Activated CD4-positive, alpha-beta T cell treated with anti-CD3 and anti-CD28 coated beads for 36 hours (primary cell): ENCODE measurements at regions of chr11 and their contacts with region 1.

Region 1: GRCh38 chr11:66616379-66617154 is at the start of gene RBM14:
- DNase-seq: peak; percentile 99
- ATAC-seq: peak; percentile 98
- H3K4me3 Mint-ChIP-seq: peak within 1 kb of the TSS; percentile 89
- H3K27ac Mint-ChIP-seq: peak within 1 kb of the TSS; percentile 97
- H3K4me1 Mint-ChIP-seq: peaks cover 31% of the 10 kb centered on the region
- H3K27me3 Mint-ChIP-seq: no peaks in the 10 kb centered on the region
- total RNA-seq, gene RBM14: 122 to 137 TPM

Region 2: GRCh38 chr11:66311965-66312548 is 304.5 kb before region 1 on chr11:
- CTCF ChIA-PET with region 1: no interaction called
- POLR2A ChIA-PET with region 1: interaction called, 4 read pairs
- intact Hi-C with region 1: loop called in 1 of 2 experiments (anchors 1 kb)
- DNase-seq: peak; percentile 98
- ATAC-seq: peak; percentile 83
- H3K4me3 Mint-ChIP-seq: peak overlapping the region; percentile 79
- H3K27ac Mint-ChIP-seq: peak overlapping the region; percentile 91
- H3K4me1 Mint-ChIP-seq: peaks cover 33% of the 10 kb centered on the region
- H3K27me3 Mint-ChIP-seq: no peaks in the 10 kb centered on the region

Region 3: DNA sequence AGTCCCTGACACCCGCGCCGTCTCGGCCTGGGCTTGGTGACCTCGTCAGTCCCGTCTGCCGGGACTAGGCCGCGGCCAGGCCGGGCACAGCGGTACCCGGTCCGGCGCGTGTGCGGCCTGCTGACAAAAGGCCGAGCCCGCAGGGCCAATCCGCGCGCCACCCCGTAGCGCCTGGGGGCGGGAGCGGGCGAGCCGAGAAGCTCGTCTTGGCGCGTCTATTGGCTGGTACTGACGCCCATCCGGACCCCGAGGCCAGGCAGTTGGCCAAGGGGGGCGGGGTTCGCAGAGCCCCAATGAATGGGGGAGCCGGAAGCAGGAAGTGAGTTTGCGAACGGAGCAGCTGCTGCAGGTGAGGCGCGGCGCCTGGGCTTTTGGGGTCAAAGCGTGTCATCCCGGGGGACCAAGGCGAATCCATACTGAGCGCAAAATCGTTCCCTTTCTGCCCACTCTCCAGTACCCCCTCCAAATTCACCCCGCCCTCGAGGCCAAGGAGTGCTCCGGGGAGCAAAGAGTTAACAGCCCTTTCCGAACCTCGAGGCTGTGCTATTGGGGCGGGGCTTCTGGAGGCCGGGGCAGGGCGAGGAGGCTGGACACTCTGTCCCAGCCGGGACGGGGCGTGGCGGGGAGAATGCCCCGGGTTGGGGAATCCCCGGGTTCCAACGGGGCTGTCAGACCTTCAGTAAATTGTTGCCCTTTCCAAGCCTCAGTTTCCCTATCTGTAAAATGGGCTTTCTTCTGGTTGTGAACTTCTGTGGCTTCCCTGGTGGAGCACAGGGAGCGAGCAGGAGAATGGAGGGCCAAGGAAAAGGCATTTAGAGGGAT is 136.2 kb before region 1 on chr11 and contains the start of gene DPP3:
- CTCF ChIA-PET with region 1: no interaction called
- POLR2A ChIA-PET with region 1: no interaction called
- intact Hi-C with region 1: loop called (anchors 1 to 5 kb)
- DNase-seq: peak; percentile 98
- ATAC-seq: peak; percentile 98
- H3K4me3 Mint-ChIP-seq: peak within 1 kb of the TSS; percentile 90
- H3K27ac Mint-ChIP-seq: peak within 1 kb of the TSS; percentile 86
- H3K4me1 Mint-ChIP-seq: peaks cover 22% of the 10 kb centered on the region
- H3K27me3 Mint-ChIP-seq: no peaks in the 10 kb centered on the region
- total RNA-seq, gene DPP3: 87.1 to 91.9 TPM

Region 4: DNA sequence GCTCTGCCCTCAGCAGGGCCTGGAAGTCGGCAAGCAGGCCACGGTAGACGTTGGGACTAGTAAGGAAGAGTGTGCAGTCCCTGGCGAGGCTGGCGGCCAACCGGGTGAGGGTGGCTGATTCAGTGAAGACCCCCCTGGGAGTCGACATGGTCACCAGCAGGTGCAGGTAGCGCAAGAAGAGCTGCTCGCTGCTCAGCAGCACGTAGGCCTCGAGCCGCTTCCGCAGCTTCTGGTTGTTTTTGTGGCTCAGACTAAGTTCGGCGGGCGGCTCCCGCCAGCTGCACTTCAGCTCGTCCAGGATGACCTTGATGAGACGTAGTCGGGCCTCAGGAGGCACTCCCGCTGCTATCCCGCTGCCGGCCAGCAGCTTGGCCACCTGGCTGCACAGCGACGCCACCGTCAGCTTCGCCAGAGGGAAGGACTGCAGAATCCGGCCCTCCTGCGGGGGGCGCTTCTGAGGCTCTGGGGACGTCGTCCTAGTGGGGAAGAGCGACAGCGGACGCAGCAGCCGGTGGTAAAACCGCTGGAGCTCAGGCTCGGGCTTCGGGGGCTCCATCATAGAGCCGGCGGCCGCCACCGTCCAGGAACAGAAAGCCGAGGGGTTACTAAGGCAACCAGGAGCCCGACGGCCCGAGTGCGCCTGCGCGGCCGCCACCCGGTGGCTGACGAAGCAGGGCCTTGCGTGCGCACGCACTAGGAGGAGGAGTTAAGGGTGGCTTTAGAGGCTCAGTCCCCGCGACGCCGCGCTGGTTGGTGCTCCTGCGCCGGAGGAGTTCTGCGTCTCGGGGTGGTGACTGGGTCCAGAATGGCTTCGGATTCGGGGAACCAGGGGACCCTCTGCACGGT is 23.9 kb before region 1 on chr11 and contains the starts of genes CCDC87 and CCS:
- CTCF ChIA-PET with region 1: interaction called, 4 read pairs
- POLR2A ChIA-PET with region 1: interaction called, 10 read pairs
- intact Hi-C with region 1: loop called (anchors 1 kb)
- DNase-seq: peak; percentile 99
- ATAC-seq: peak; percentile 100
- H3K4me3 Mint-ChIP-seq: peak within 1 kb of the TSS; percentile 93
- H3K27ac Mint-ChIP-seq: peak within 1 kb of the TSS; percentile 98
- H3K4me1 Mint-ChIP-seq: peaks cover 19% of the 10 kb centered on the region
- H3K27me3 Mint-ChIP-seq: no peaks in the 10 kb centered on the region
- total RNA-seq, gene CCDC87: 0.09 to 0.14 TPM
- total RNA-seq, gene CCS: 16.3 to 24.0 TPM

Region 5: DNA sequence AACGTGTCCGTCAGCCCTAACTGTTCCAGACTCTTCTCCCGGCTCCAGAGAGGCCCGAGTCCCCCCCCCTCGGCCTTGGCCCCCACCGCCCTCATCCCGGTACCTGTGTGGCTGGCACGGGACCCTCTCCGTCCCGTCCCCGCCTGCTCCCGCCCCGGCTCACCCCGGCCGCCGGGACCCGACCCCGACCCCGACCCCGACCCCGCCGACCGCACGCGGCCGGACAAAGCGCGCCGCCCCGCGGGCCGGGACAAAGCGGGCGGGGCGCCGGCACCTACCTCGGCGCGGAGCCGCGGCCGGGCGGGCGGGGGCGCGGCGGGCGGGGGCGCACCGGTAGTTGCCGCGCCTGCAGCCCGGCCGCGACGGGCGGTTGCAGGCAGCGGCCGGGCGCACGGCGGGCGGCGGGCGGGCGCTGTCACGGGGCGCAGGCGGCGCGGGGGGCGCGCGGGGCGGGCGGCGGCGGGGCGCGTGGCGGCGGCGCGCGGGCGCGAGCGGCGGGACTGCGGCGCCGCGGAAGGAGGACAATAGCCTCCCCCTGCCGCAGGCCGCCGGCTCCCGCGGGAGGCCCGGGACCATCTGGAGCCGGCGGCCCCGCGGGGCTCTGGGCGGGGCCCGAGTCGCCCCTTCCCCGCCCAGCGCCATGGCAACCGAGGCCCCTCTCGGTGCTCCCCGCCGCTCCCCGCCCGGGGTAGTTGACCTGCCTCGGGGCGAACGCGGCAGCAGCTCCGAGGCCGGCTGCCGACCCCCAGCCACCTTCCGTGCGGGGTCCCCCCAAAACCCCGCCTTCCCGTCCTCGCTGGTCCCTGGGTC is 111.5 kb after region 1 on chr11:
- CTCF ChIA-PET with region 1: no interaction called
- POLR2A ChIA-PET with region 1: no interaction called
- intact Hi-C with region 1: no loop called
- DNase-seq: peak; percentile 13
- ATAC-seq: peak; percentile 38
- H3K4me3 Mint-ChIP-seq: peak overlapping the region; percentile 70
- H3K27ac Mint-ChIP-seq: peak overlapping the region; percentile 45
- H3K4me1 Mint-ChIP-seq: peaks cover 11% of the 10 kb centered on the region
- H3K27me3 Mint-ChIP-seq: peaks cover 44% of the 10 kb centered on the region

Region 6: GRCh38 chr11:66744485-66745340 is 128.1 kb after region 1 on chr11:
- CTCF ChIA-PET with region 1: no interaction called
- POLR2A ChIA-PET with region 1: no interaction called
- intact Hi-C with region 1: loop called in 1 of 2 experiments (anchors 1 kb)
- DNase-seq: peak; percentile 93
- ATAC-seq: peak; percentile 88
- H3K4me3 Mint-ChIP-seq: peak overlapping the region; percentile 95
- H3K27ac Mint-ChIP-seq: peak overlapping the region; percentile 84
- H3K4me1 Mint-ChIP-seq: peaks cover 7% of the 10 kb centered on the region
- H3K27me3 Mint-ChIP-seq: no peaks in the 10 kb centered on the region

Region 7: GRCh38 chr11:67118801-67119584 is 502.4 kb after region 1 on chr11 and contains the start of gene KDM2A:
- CTCF ChIA-PET with region 1: no interaction called
- POLR2A ChIA-PET with region 1: no interaction called
- intact Hi-C with region 1: loop called in 1 of 2 experiments (anchors 1 kb)
- DNase-seq: peak; percentile 100
- ATAC-seq: peak; percentile 85
- H3K4me3 Mint-ChIP-seq: peak within 1 kb of the TSS; percentile 98
- H3K27ac Mint-ChIP-seq: peak within 1 kb of the TSS; percentile 83
- H3K4me1 Mint-ChIP-seq: peaks cover 28% of the 10 kb centered on the region
- H3K27me3 Mint-ChIP-seq: no peaks in the 10 kb centered on the region
- total RNA-seq, gene KDM2A: 74.8 to 89.7 TPM